A549 (cell line): ENCODE measurements at regions of chr2 and their contacts with region 1.

Region 1: GRCh38 chr2:160109936-160110673 is 47.7 kb upstream of the PLA2R1 start:
- DNase-seq: peak; percentile 35 to 81
- ATAC-seq: peak; percentile 89 to 99; a peak in 5 of 6 replicates
- H3K4me3 ChIP-seq: no peak overlapping the region
- H3K27ac ChIP-seq: peak overlapping the region; percentile 46 to 80
- H3K4me1 ChIP-seq: peaks cover 10% of the 10 kb centered on the region
- CTCF ChIP-seq: peak; percentile 96
- EP300 ChIP-seq: no peak
- POLR2A ChIP-seq: no peak
- RAD21 ChIP-seq: peak; percentile 98

Region 2: DNA sequence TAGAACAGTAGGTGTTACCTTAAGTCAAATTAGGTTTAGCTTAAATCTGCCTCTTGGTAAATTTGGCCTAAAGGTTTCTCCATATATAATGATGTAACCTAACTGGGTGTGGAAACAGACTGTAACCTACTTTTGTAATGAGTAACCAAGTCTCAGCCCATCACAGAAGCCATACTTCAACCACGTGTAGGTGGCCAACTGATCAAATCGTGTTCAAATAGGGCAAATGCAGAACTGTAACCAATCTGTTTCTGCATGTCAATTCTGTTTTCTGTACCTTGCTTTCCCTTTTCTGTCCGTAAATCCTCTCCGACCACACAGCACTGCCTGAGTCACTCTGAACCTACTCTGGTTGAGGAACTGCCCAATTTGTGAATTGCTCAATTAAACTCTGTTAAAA is 13.7 kb before region 1 on chr2:
- CTCF ChIA-PET with region 1: interaction called, 23 read pairs
- POLR2A ChIA-PET with region 1: no interaction called
- DNase-seq: no peak
- ATAC-seq: no peak
- H3K4me3 ChIP-seq: no peak overlapping the region
- H3K27ac ChIP-seq: no peak overlapping the region
- H3K4me1 ChIP-seq: peaks cover 5% of the 10 kb centered on the region
- CTCF ChIP-seq: no peak
- EP300 ChIP-seq: no peak
- POLR2A ChIP-seq: no peak
- RAD21 ChIP-seq: no peak

Region 3: DNA sequence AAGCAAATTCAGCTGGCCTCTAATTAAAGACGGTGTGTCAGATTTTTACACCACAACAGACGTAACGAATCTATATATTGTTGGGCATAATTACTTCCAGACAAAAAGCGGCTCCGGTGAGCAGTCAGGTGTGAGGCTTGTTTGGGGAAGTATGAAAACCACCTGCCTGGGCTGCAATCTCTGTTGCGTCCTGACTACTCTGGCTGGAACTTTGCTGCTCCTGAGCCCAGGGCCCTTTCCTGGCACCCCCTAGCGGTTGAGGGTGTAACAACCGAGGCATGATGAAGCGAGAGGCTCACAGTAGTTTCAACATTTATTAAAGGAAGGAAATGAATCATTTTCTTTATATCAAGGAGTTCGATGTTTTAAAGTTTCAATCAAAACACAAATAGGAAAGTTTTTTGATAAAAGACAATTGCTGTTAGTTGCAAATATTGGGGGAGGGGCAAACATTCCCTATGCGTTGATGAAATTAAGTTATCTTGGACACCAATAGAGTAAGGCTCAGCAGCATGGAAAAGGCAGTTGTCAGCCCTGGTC is 100.6 kb after region 1 on chr2:
- CTCF ChIA-PET with region 1: interaction called, 46 read pairs
- POLR2A ChIA-PET with region 1: interaction called, 4 read pairs
- DNase-seq: peak; percentile 50 to 86
- ATAC-seq: peak; percentile 54 to 67
- H3K4me3 ChIP-seq: no peak overlapping the region
- H3K27ac ChIP-seq: peak overlapping the region; percentile 97 to 99
- H3K4me1 ChIP-seq: peaks cover 91% of the 10 kb centered on the region
- CTCF ChIP-seq: peak; percentile 87
- EP300 ChIP-seq: no peak
- POLR2A ChIP-seq: no peak
- RAD21 ChIP-seq: peak; percentile 83 to 87

Region 4: DNA sequence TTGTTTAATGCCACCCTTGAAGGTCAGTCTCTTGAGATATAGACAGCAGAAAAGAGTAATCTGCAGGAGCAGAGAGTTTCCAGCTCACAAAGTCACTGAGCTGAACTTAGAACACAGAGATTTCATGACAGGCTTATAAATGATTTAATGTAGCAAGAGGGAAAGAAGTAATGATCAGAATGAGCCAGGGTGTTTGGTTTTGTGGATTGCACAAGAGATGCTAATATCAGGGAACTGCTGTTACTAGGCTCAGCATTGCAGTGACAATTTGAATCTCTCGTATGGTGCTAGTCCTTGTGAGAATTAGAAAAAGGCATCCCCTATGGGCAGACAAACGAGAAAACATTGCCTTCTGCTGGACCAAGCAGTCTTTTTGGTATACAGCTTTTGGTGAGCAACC is 151.6 kb after region 1 on chr2:
- CTCF ChIA-PET with region 1: interaction called, 20 read pairs
- POLR2A ChIA-PET with region 1: no interaction called
- DNase-seq: no peak
- ATAC-seq: peak in 1 of 2 experiments; percentile 13; a peak in 3 of 6 replicates
- H3K4me3 ChIP-seq: no peak overlapping the region
- H3K27ac ChIP-seq: peak overlapping the region in 1 of 2 experiments; percentile 56; a peak in 2 of 6 replicates
- H3K4me1 ChIP-seq: peaks cover 17% of the 10 kb centered on the region
- CTCF ChIP-seq: no peak
- EP300 ChIP-seq: no peak
- POLR2A ChIP-seq: no peak
- RAD21 ChIP-seq: no peak

Region 5: GRCh38 chr2:160324161-160324800 is 214.2 kb after region 1 on chr2:
- CTCF ChIA-PET with region 1: interaction called, 10 read pairs
- POLR2A ChIA-PET with region 1: no interaction called
- DNase-seq: peak; percentile 15 to 64
- ATAC-seq: peak in 1 of 2 experiments; percentile 71; a peak in 3 of 6 replicates
- H3K4me3 ChIP-seq: no peak overlapping the region
- H3K27ac ChIP-seq: peak overlapping the region in 1 of 2 experiments; percentile 29; a peak in 1 of 6 replicates
- H3K4me1 ChIP-seq: peaks cover 92% of the 10 kb centered on the region
- CTCF ChIP-seq: peak; percentile 79
- EP300 ChIP-seq: no peak
- POLR2A ChIP-seq: no peak
- RAD21 ChIP-seq: peak; percentile 71 to 76

Region 6: DNA sequence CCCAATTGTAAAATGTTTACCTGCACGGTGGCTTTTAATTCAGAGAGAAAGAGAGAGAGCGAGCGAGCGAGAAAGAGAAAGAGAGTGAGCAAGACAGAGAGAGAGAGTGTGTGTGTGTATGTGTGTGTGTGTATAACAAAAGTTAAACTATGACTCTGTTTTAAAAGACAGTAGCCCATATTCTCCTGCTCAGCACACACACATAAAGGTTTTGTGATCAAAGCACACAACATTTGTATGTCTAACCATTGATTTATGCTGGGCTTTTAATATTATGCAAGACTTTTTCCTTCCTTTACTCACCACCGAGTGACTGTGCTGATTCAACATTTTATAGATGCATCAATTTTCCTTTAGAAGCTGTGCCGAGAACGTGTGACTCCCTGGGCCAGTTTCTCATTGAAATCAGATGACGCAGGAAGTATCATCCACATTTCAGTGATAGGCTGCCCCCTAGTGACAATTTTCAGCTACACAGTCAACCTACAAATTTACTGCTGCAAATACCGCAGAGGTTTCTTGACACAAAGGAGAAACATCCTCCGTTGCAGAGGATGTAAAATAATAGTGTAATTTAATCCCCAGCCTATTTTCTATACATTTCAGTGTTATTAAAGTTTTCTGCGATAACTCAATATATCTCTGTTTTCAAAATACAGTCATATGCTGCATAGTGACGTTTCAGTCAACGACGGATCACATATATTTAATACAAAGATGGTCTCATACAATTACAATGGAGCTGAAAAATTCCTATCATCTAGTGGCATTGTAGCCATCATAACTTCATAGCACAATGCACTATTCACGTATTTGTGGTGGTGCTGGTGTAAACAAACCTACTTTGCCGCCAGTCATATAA is 884.3 kb after region 1 on chr2:
- CTCF ChIA-PET with region 1: interaction called, 32 read pairs
- POLR2A ChIA-PET with region 1: no interaction called
- DNase-seq: peak; percentile 40 to 79
- ATAC-seq: peak; percentile 92 to 97
- H3K4me3 ChIP-seq: no peak overlapping the region
- H3K27ac ChIP-seq: peak overlapping the region; percentile 9 to 73; a peak in 4 of 6 replicates
- H3K4me1 ChIP-seq: peaks cover 3% of the 10 kb centered on the region; the same call in 1 of the 3 replicates
- CTCF ChIP-seq: peak; percentile 89
- EP300 ChIP-seq: no peak
- POLR2A ChIP-seq: no peak
- RAD21 ChIP-seq: peak; percentile 93 to 96